ENCODE measurements at regions of chr11 and their contacts with region 1.

Region 1: DNA sequence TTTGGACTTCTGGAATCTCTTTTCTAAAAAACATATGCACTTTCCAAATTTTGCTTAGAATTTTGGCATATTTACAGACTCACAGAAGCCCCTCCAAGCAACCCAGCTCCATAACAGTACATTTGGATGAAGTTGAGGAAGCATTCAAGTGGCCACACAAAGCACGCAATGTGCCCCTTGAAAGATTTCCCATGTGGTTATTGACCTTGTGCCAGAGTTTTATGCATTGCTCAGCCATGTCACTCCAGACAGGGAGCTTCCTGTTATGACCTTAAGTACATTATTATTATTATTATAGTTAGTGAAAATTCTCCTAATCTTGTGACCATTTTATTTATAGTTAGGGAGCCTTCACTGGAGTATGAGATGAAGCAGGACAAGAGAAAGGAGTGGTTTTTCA is 35.0 kb upstream of the BDNF start:
- DNase-seq: no peak
- ATAC-seq: no peak
- H3K4me3 ChIP-seq: no peak overlapping the region
- H3K27ac ChIP-seq: no peak overlapping the region
- H3K4me1 ChIP-seq: no peaks in the 10 kb centered on the region
- H3K27me3 ChIP-seq: no peaks in the 10 kb centered on the region

Region 2: GRCh38 chr11:26891501-26891900 is 843.8 kb before region 1 on chr11:
- intact Hi-C with region 1: no loop called
- DNase-seq: no peak
- ATAC-seq: no peak
- H3K4me3 ChIP-seq: no peak overlapping the region
- H3K27ac ChIP-seq: no peak overlapping the region
- H3K4me1 ChIP-seq: no peaks in the 10 kb centered on the region
- H3K27me3 ChIP-seq: no peaks in the 10 kb centered on the region

Region 3: DNA sequence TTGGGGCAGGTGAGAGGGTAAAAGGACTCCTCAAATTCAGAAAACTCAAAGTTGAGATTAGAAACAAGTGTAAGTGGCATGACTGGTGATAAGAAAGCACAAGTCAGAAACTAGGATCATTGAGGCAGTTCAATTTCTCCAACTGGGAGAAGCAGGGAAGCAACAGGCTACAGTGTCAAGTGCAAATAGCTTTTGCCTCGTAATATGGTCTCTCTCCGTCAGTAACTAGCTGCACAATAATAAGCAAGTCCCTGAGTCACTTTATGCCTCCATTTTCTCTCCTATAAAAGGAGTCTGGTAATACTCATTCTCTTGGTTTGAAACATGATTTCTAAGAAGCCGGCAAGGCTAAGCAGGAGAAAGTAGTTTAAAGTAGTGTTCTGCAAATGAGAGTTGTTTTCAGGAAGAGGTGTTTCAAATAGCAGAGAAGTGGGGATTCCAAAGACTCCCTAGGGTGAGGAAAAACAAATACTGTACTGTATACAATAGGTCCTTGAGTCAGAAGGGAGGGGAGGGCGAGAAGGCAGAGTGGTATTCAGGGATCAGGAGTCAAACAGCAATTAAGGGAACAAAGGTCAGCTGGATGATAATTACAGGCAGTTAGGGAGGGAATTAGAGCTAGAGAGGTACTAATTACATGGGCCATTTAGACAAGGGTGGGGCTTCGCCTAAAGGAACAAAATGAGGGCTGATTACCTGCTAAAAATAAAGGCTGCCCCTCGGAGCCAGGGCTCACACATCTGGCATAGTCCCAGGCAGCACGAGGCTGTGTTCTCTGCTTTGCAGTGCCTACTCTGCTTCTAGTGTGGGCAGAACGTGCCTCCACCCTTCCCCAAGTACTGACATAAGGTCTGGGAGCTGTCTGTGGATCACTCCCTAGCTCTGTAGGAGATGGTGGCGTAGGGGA is 60.9 kb after region 1 on chr11:
- intact Hi-C with region 1: loop called in 1 of 4 experiments (anchors 10 kb)
- DNase-seq: no peak
- ATAC-seq: peak in 1 of 2 donors; percentile 51
- H3K4me3 ChIP-seq: no peak overlapping the region
- H3K27ac ChIP-seq: no peak overlapping the region
- H3K4me1 ChIP-seq: no peaks in the 10 kb centered on the region
- H3K27me3 ChIP-seq: no peaks in the 10 kb centered on the region